ENCODE measurements at regions of chr5 and their contacts with region 1.

Region 1: DNA sequence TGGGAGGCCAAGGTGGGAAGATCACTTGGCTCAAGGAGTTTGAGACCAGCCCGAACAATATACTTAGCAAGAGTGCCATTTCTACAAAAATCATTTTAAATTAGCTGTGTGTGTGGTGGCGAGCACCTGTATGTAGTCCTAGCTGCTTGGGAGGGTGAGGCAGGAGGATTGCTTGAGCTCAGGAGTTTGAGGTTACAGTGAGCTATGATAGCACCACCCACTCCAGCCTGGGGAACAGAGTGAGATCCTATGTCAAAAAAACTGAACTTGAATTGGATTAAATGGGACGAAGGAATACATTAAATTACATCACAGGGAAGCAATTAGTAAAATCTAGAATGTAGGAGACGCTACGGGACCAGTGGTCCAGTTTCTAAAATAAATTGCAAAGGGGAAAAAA is 6.4 kb upstream of the ETF1 start:
- DNase-seq: no peak
- ATAC-seq: no peak
- H3K4me3 ChIP-seq: no peak overlapping the region
- H3K4me3 Mint-ChIP-seq: no peak overlapping the region
- H3K27ac ChIP-seq: no peak overlapping the region
- H3K27ac Mint-ChIP-seq: peak overlapping the region in 2 of 9 donors; percentile 32 to 71
- H3K4me1 ChIP-seq: peaks cover 17 to 25% of the 10 kb centered on the region in 2 donors
- H3K4me1 Mint-ChIP-seq: peaks cover 31 to 62% (median 45%) of the 10 kb centered on the region in 7 donors
- H3K27me3 ChIP-seq: no peaks in the 10 kb centered on the region
- H3K27me3 Mint-ChIP-seq: no peaks in the 10 kb centered on the region

Region 2: GRCh38 chr5:138568061-138568824 is 18.8 kb after region 1 on chr5:
- CTCF ChIA-PET with region 1: interaction called, 4 read pairs
- POLR2A ChIA-PET with region 1: interaction called, 62 read pairs
- intact Hi-C with region 1: loop called in 1 of 2 experiments (anchors 2 kb)
- DNase-seq: no peak
- ATAC-seq: no peak
- H3K4me3 ChIP-seq: no peak overlapping the region
- H3K4me3 Mint-ChIP-seq: peak overlapping the region in 2 of 10 donors; percentile 2
- H3K27ac ChIP-seq: no peak overlapping the region
- H3K27ac Mint-ChIP-seq: peak overlapping the region in 7 of 9 donors; percentile 23 to 63 (median 49)
- H3K4me1 ChIP-seq: peaks cover 24 to 38% of the 10 kb centered on the region in 2 donors
- H3K4me1 Mint-ChIP-seq: peaks cover 24 to 77% (median 60%) of the 10 kb centered on the region in 7 donors
- H3K27me3 ChIP-seq: no peaks in the 10 kb centered on the region
- H3K27me3 Mint-ChIP-seq: no peaks in the 10 kb centered on the region

Region 3: GRCh38 chr5:140020601-140021177 is 1471.3 kb after region 1 on chr5:
- CTCF ChIA-PET with region 1: no interaction called
- POLR2A ChIA-PET with region 1: no interaction called
- intact Hi-C with region 1: no loop called
- DNase-seq: no peak
- ATAC-seq: no peak
- H3K4me3 ChIP-seq: no peak overlapping the region
- H3K4me3 Mint-ChIP-seq: no peak overlapping the region
- H3K27ac ChIP-seq: no peak overlapping the region
- H3K27ac Mint-ChIP-seq: no peak overlapping the region
- H3K4me1 ChIP-seq: no peaks in the 10 kb centered on the region
- H3K4me1 Mint-ChIP-seq: no peaks in the 10 kb centered on the region
- H3K27me3 ChIP-seq: peaks cover 0 to 3% of the 10 kb centered on the region in 2 donors
- H3K27me3 Mint-ChIP-seq: peaks cover 11 to 18% (median 14%) of the 10 kb centered on the region in 5 donors

Measured in naive thymus-derived CD4-positive, alpha-beta T cell (primary cell).